K562 (cell line): ENCODE measurements at regions of chr13 and their contacts with region 1.

Region 1: DNA sequence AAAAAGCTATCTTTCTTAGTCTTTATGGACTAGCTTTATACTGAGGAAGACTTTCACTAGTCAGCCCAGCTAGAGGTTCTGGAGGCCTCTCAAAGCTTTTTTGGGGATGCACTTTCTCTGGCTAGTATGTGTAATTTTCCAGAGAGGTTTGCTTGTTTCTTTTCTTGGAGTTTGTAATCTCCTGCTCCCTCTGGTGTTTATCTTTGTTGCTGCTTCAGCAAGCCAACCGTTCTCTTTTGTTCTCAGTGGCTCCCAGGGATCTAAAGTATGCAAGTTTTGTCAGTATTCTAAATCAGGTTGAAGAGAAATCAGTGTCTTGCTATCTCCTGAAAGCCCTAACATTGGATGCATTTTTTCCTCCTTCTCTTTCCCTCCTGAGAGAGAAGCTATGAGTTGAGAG is 121.1 kb upstream of the MYO16 start:
- DNase-seq: peak in 1 of 4 experiments; percentile 27
- ATAC-seq: no peak
- H3K4me3 ChIP-seq: no peak overlapping the region
- H3K27ac ChIP-seq: no peak overlapping the region
- H3K4me1 ChIP-seq: no peaks in the 10 kb centered on the region
- H3K27me3 ChIP-seq: no peaks in the 10 kb centered on the region
- CTCF ChIP-seq: peak in 2 of 3 experiments; percentile 22 to 40; a peak in 3 of 6 replicates
- EP300 ChIP-seq: no peak
- POLR2A ChIP-seq: no peak
- RAD21 ChIP-seq: peak; percentile 38 to 42; a peak in 2 of 4 replicates

Region 2: DNA sequence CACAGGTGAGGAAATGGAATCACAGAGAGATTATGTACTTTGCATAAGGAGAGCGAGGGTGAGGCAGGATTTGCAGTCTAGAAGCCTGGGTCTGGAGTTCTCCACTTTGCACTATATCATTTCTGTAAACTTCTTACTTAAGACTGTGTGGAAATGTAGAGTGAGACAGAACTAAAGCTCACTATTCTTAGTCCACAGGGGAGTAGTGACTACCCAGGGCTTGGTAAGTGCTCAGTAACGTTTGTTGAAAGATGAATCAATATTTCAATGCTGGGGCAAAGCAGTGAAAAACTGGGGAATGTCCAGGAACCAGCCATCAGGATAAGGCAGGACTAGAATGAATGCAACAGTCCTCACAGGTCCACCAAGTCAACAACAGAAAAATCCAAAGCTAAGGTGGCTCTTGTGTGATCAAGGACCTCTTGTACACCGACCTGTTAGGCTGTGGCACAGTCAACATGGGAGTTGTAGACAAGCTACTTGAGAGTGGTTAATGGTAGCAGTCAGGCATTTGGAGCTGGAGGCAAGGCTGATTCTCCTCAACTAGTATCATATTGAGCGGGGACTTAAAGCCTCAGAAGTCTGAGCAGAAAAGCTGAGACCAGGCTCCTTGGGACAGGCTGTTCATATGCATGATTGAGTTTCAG is 239.7 kb before region 1 on chr13:
- CTCF ChIA-PET with region 1: no interaction called
- POLR2A ChIA-PET with region 1: no interaction called
- in situ Hi-C with region 1: no loop called
- intact Hi-C with region 1: no loop called
- DNase-seq: no peak
- ATAC-seq: peak; percentile 16
- H3K4me3 ChIP-seq: no peak overlapping the region
- H3K27ac ChIP-seq: no peak overlapping the region
- H3K4me1 ChIP-seq: peaks cover 2 to 7% of the 10 kb centered on the region in 2 experiments; a peak in 4 of 5 replicates
- H3K27me3 ChIP-seq: no peaks in the 10 kb centered on the region
- CTCF ChIP-seq: no peak
- EP300 ChIP-seq: no peak
- POLR2A ChIP-seq: no peak
- RAD21 ChIP-seq: no peak

Region 3: DNA sequence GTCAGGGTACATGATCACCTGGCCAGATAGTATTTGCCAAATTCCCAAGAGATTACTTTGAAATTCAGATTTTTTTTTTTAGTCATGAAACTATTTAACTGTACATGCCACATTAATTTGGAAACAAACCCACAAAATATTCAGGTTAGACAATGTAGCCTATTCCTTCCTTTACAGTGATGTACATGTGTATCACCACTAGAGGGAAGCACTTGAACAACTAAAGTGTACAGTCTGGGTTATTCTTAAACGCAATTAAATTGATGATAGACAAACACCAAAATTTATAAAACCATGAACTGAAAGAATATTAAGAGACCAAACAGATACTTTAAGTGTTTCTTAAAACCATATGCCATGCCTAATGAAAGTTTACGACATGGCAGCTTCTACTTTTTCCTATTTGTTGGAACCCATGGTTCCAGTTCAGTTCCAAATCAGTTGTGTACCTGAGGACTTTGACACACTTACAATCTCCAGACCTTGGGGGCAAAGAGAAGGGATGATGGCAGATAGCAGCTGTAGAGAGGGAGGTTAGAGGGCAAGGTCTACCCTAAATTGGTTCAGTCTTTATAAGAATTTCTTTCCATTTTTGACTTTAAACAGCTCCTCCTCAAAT is 185.9 kb before region 1 on chr13:
- CTCF ChIA-PET with region 1: no interaction called
- POLR2A ChIA-PET with region 1: no interaction called
- in situ Hi-C with region 1: no loop called
- intact Hi-C with region 1: loop called (anchors 5 kb)
- DNase-seq: peak; percentile 10 to 47 (median 26)
- ATAC-seq: peak; percentile 86
- H3K4me3 ChIP-seq: no peak overlapping the region
- H3K27ac ChIP-seq: no peak overlapping the region
- H3K4me1 ChIP-seq: no peaks in the 10 kb centered on the region
- H3K27me3 ChIP-seq: no peaks in the 10 kb centered on the region
- CTCF ChIP-seq: peak; percentile 31 to 61 (median 38); a peak in 3 of 6 replicates
- EP300 ChIP-seq: no peak
- POLR2A ChIP-seq: no peak
- RAD21 ChIP-seq: peak; percentile 71 to 79